Prostate gland (tissue), 2 donors: ENCODE measurements at regions of chr17 and their contacts with region 1.

Region 1: GRCh38 chr17:59311130-59311920 is 20.1 kb upstream of the YPEL2 start:
- DNase-seq: peak; percentile 44
- H3K4me3 ChIP-seq: no peak overlapping the region
- H3K27ac ChIP-seq: no peak overlapping the region
- H3K4me1 ChIP-seq: no peaks in the 10 kb centered on the region
- H3K27me3 ChIP-seq: no peaks in the 10 kb centered on the region
- CTCF ChIP-seq: peak in 3 of 4 experiments; percentile 62 to 90 (median 88)
- POLR2A ChIP-seq: no peak

Region 2: DNA sequence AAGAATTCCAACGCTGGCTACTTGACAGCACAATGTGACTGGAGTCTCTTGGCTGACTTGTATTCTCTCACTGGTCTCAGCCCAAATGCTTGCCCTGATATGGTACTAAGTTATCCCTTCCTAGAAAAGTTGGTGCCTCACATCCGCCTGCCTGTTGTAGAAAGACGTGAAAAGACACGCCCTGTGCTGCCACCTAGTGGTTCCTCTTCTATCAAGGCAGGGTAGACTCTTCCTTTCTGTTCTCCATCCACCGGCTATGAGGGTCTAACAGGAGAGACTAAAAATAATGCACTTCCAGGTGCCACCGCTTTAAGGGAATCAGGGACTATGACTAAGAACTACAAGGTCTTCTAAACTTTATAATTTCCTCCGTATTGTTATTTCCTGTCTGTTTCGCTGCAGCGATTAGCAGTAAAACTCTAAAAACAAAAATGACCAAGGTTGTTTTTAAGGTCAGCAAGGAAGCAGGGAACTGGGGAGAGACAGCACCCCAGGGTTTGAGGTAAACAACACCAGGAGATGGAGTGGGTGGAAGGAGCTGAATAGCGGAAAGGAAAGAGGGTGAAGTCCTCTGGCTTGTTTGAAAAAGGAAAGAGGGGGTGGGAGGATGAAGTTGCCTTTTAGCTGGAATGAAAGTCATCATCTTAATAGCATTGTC is 129.6 kb after region 1 on chr17:
- intact Hi-C with region 1: loop called (anchors 1 kb)
- DNase-seq: peak; percentile 92
- H3K4me3 ChIP-seq: no peak overlapping the region
- H3K27ac ChIP-seq: peak overlapping the region in 1 of 2 donors; percentile 35
- H3K4me1 ChIP-seq: no peaks in the 10 kb centered on the region
- H3K27me3 ChIP-seq: no peaks in the 10 kb centered on the region
- CTCF ChIP-seq: peak; percentile 46 to 92 (median 89)
- POLR2A ChIP-seq: no peak